ENCODE measurements at regions of chr19 and their contacts with region 1.

Region 1: DNA sequence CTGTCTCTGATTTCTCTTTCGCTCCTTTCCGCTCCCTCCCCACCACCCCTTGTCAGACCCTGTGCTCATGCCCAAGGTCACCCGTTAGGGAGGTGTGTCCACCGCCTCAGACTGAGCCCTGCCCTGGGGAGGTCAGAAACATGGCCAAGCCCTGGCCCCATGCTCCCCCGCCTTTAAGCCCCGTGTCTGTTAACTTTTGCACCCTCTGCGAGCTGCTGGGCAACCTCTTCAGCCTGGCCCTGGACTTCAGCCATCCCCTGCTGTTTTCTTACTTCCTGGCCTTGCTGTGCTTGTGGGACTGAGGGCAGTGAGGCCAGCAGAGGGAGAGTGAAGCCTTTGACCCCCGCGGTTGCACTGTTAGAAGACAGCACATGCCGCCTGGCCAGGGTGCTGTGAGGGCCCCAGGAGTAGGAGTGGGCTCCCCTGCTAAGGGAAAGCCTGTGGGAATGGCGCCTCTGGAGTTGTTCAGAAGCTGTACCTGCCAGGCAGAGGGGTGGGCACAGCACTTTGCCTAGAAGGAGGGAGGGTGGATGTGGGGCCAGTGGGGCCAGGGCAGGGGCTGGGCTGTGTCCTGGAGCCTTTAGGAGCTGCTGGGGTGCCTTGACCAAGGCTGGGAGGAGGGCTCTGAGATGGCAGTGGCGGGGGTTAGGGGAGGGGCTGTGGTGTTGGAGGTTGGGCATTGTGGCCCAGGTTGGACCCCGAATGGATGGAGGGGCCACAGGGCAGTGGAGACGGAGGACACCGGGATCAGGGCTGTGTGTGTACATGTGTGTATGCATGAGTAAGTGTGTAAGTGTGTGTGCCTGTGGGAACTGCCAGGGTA is 7.9 kb downstream of the UPF1 start:
- DNase-seq: no peak
- ATAC-seq: no peak
- H3K4me3 ChIP-seq: no peak overlapping the region
- H3K27ac ChIP-seq: no peak overlapping the region
- H3K4me1 ChIP-seq: no peaks in the 10 kb centered on the region; the same call in 2 of the 3 replicates
- CTCF ChIP-seq: no peak
- EP300 ChIP-seq: no peak
- POLR2A ChIP-seq: no peak
- RAD21 ChIP-seq: no peak

Region 2: GRCh38 chr19:18594096-18594823 is 245.4 kb before region 1 on chr19:
- CTCF ChIA-PET with region 1: interaction called, 13 read pairs
- POLR2A ChIA-PET with region 1: no interaction called
- DNase-seq: peak; percentile 44 to 57
- ATAC-seq: peak; percentile 25 to 52; a peak in 5 of 6 replicates
- H3K4me3 ChIP-seq: peak overlapping the region; percentile 29; the same call in 2 of the 3 replicates
- H3K27ac ChIP-seq: peak overlapping the region; percentile 66 to 84
- H3K4me1 ChIP-seq: peaks cover 9% of the 10 kb centered on the region; the same call in 1 of the 3 replicates
- CTCF ChIP-seq: peak; percentile 70
- EP300 ChIP-seq: no peak
- POLR2A ChIP-seq: no peak
- RAD21 ChIP-seq: peak; percentile 56 to 67

Region 3: GRCh38 chr19:18961767-18962620 is 122.3 kb after region 1 on chr19:
- CTCF ChIA-PET with region 1: no interaction called
- POLR2A ChIA-PET with region 1: no interaction called
- DNase-seq: no peak
- ATAC-seq: peak in 1 of 2 experiments; percentile 34; a peak in 2 of 6 replicates
- H3K4me3 ChIP-seq: no peak overlapping the region
- H3K27ac ChIP-seq: no peak overlapping the region
- H3K4me1 ChIP-seq: no peaks in the 10 kb centered on the region
- CTCF ChIP-seq: no peak
- EP300 ChIP-seq: no peak
- POLR2A ChIP-seq: no peak
- RAD21 ChIP-seq: no peak

Measured in A549 (cell line).